ENCODE measurements at regions of chr10 and their contacts with region 1.

Region 1: GRCh38 chr10:100501423-100501822 is 18.2 kb downstream of the SEC31B start:
- DNase-seq: no peak
- H3K4me3 Mint-ChIP-seq: no peak overlapping the region
- H3K27ac Mint-ChIP-seq: peak overlapping the region; percentile 19
- H3K4me1 Mint-ChIP-seq: peaks cover 93% of the 10 kb centered on the region
- H3K27me3 Mint-ChIP-seq: no peaks in the 10 kb centered on the region

Region 2: GRCh38 chr10:100481462-100482081 is 19.9 kb before region 1 on chr10:
- CTCF ChIA-PET with region 1: interaction called, 206 read pairs
- DNase-seq: peak; percentile 93
- H3K4me3 Mint-ChIP-seq: peak overlapping the region; percentile 72
- H3K27ac Mint-ChIP-seq: peak overlapping the region; percentile 67
- H3K4me1 Mint-ChIP-seq: peaks cover 31% of the 10 kb centered on the region
- H3K27me3 Mint-ChIP-seq: peaks cover 18% of the 10 kb centered on the region